ENCODE measurements at regions of chr1 and their contacts with region 1.

Region 1: DNA sequence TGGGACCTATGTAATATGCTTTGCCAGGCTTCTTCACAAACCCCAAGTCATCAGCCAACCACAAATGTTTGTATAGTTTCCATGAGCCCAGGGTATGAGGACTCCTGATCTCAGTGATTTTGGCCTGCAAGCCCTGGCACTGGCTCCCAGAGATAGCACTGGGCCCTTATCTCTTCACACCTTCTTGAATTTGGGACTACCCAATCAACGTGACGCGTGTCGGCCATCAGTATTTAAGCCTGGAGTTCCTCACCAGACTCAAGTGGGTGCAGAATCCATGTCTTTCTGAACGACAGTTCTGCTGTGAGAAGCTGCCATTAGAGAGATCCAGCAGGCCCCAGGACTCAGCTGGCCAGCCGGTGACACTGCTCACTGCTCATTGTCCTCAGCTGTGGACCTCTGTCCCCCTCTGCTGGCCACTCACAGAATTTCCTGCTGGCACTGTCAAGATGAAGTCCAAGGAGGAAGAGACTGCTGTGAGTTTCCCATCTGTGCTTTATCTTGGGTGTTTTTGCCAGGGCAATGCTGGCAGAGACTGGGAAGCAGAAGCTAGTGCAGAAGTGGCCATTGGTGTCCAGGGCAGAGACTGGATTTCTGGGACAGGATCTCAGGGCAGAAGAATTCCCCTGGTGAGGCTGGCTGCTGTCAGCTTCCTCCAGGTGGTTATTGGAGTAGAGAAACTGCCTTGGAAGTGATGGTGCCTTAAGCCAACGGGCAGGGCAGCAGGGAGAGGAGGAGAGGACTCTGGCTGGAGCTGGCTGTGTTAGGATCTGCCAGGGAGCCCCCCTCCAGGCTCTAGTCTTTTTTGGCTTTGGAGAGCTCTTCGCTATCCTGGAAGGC is 28.4 kb downstream of the TMCC2 start:
- DNase-seq: peak; percentile 83
- CTCF ChIP-seq: peak; percentile 93

Region 2: GRCh38 chr1:204980840-204981405 is 275.2 kb before region 1 on chr1:
- CTCF ChIA-PET with region 1: interaction called, 71 read pairs
- POLR2A ChIA-PET with region 1: no interaction called
- DNase-seq: no peak
- CTCF ChIP-seq: no peak

Region 3: GRCh38 chr1:205199090-205199930 is 56.9 kb before region 1 on chr1:
- CTCF ChIA-PET with region 1: interaction called, 10 read pairs
- POLR2A ChIA-PET with region 1: no interaction called
- DNase-seq: no peak
- CTCF ChIP-seq: peak; percentile 12

Region 4: GRCh38 chr1:205227584-205228006 is 28.6 kb before region 1 on chr1 and contains the start of gene TMCC2:
- CTCF ChIA-PET with region 1: interaction called, 743 read pairs
- POLR2A ChIA-PET with region 1: interaction called, 4 read pairs
- DNase-seq: peak; percentile 94
- CTCF ChIP-seq: no peak

Region 5: DNA sequence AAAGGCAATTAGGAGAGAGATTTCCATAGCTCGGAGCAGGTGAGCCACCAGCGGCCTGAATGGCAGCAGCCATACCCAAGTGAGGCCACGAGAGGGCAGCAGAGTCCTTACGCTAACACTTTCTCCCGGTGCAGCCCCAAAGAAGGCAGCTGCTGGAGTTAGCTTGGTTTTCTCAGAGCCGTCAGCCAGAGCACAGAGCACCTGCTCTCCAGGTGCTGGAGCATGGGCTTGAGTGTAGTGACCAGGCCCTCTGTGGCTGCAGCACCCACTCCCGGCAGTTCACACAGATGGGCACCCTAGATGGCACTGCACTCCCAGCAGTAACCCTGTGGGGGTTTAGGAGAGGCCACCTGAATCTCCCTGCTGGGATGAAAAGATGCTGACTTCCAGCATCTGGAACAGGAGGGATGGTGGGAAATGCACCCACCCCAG is 17.4 kb after region 1 on chr1:
- CTCF ChIA-PET with region 1: interaction called, 246 read pairs
- POLR2A ChIA-PET with region 1: no interaction called
- DNase-seq: peak; percentile 90
- CTCF ChIP-seq: peak; percentile 91

Measured in GM10248 (cell line).